Activated CD4-positive, alpha-beta T cell treated with anti-CD3 and anti-CD28 coated beads, Interleukin-2, amount 10 ng/mL, durations not matched to agents 24 days and 14 days (primary cell): ENCODE measurements at regions of chr6 and their contacts with region 1.

Region 1: DNA sequence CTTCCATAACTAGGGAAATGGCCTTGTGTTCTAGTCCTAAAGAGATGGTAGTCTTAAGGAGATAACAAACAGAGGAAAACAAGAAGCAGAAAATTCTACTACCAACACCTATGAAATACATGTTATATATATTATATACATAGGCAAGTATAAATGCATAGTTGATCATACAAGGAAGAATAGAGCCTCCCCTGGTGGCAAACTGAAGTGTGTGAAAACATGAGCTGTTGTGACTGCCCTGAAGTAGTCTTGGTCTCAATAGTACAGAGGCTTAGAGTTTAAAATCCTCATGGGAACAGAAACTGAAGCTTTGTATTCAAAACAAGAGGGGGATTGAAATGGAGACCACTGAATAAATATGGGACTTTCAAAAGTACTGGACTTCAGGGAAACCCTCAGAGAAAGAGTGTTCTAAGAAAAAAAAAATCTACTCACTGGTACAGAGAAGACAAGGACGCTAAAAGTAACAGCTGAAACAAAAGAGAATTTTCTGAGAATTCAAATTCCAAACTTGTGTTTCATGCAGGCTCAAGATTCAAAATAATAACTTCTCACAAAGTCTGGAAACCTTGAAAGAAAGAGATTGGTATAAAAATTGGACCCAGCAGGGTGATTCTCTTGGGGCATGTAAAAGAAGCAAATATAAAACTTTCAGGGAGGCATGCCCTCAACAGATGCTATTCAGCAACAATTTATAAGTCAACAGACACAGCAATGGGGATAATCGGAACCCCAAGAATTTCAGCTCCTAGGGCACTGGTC is 59.7 kb upstream of the SAMD3 start:
- DNase-seq: peak; percentile 81
- H3K4me3 Mint-ChIP-seq: peak overlapping the region; percentile 8
- H3K27ac Mint-ChIP-seq: no peak overlapping the region
- H3K4me1 Mint-ChIP-seq: peaks cover 9% of the 10 kb centered on the region
- H3K27me3 Mint-ChIP-seq: peaks cover 2% of the 10 kb centered on the region

Region 2: GRCh38 chr6:130037207-130037811 is 245.1 kb before region 1 on chr6:
- intact Hi-C with region 1: loop called (anchors 5 kb)
- DNase-seq: no peak
- H3K4me3 Mint-ChIP-seq: no peak overlapping the region
- H3K27ac Mint-ChIP-seq: no peak overlapping the region
- H3K4me1 Mint-ChIP-seq: peaks cover 32% of the 10 kb centered on the region
- H3K27me3 Mint-ChIP-seq: peaks cover 3% of the 10 kb centered on the region

Region 3: DNA sequence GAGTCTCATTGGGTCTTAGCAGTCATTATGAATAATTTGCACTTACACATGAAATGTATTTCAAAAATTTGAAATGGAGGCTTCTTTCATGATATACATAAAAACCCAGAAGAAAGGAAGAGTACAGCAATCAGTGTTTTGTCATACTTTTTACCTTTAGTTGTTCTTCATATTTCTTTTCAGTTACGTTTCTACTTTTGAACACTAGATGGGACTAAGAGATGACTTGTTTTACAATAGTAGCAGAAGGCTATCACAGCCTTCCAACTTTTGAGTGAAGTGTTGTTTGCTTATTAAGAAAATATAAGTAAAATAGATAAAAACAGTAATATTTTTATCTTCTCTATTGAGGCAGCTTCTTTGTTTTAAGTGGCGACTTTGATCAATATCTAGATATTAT is 205.9 kb before region 1 on chr6:
- intact Hi-C with region 1: loop called (anchors 2 kb)
- DNase-seq: no peak
- H3K4me3 Mint-ChIP-seq: no peak overlapping the region
- H3K27ac Mint-ChIP-seq: no peak overlapping the region
- H3K4me1 Mint-ChIP-seq: peaks cover 21% of the 10 kb centered on the region
- H3K27me3 Mint-ChIP-seq: no peaks in the 10 kb centered on the region

Region 4: GRCh38 chr6:130132286-130132701 is 150.1 kb before region 1 on chr6:
- intact Hi-C with region 1: loop called (anchors 1 kb)
- DNase-seq: peak; percentile 92
- H3K4me3 Mint-ChIP-seq: peak overlapping the region; percentile 66
- H3K27ac Mint-ChIP-seq: peak overlapping the region; percentile 93
- H3K4me1 Mint-ChIP-seq: peaks cover 62% of the 10 kb centered on the region
- H3K27me3 Mint-ChIP-seq: no peaks in the 10 kb centered on the region

Region 5: DNA sequence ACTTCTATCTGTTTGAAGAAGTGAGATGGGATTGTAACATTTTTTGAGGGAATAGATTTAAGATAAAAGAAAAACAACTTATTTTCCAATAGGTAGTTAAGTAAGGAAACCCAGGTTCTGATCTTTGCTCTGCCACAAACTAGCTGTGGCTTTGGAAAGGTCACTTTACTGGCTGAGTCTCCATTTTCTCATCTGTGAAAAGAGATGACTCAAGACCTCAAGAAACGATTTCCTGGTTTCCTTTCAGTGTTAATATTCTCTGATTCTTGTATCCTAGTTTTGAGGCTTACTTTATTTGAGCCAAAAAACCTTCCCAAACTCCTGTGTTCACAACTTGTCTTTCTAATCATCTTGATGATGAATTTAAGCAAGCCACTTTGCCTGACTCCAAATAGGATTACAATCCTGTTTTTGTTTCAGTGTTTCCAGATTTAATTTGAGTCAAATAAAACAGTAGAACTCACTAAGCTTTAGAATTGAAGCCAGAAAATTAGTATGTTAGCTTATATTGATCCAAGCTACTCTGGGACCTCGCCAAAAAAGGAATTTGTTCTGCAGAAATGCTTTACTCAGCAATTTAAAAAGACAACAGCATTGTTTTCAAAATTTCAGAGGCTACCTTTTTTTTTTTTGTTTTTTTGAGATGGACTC is 1576.5 kb after region 1 on chr6:
- intact Hi-C with region 1: no loop called
- DNase-seq: peak; percentile 19
- H3K4me3 Mint-ChIP-seq: no peak overlapping the region
- H3K27ac Mint-ChIP-seq: no peak overlapping the region
- H3K4me1 Mint-ChIP-seq: no peaks in the 10 kb centered on the region
- H3K27me3 Mint-ChIP-seq: peaks cover 2% of the 10 kb centered on the region